Mammary epithelial cell (primary cell): ENCODE measurements at regions of chr14 and their contacts with region 1.

Region 1: DNA sequence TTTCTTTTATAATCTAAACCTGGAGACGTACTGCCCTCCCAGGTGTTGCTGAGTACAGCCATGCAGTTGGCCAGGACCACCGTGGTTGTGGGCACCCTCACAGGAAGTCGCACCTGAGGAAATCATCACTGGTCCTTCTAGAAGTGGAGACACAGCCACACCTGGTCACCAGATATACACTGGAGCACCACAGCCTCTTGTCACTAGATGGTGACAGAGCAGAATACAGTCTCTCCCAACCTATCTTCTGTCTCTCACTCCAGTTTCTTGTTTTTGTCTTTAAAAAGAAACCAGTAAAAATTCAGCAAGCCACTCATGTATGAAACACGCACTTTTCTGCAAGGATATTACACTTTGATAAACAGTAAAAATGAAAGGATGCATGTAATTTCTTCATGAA is 43.1 kb upstream of the GPHB5 start:
- DNase-seq: no peak
- H3K4me3 ChIP-seq: no peak overlapping the region
- H3K27ac ChIP-seq: no peak overlapping the region
- H3K4me1 ChIP-seq: no peaks in the 10 kb centered on the region
- H3K27me3 ChIP-seq: no peaks in the 10 kb centered on the region
- CTCF ChIP-seq: no peak

Region 2: DNA sequence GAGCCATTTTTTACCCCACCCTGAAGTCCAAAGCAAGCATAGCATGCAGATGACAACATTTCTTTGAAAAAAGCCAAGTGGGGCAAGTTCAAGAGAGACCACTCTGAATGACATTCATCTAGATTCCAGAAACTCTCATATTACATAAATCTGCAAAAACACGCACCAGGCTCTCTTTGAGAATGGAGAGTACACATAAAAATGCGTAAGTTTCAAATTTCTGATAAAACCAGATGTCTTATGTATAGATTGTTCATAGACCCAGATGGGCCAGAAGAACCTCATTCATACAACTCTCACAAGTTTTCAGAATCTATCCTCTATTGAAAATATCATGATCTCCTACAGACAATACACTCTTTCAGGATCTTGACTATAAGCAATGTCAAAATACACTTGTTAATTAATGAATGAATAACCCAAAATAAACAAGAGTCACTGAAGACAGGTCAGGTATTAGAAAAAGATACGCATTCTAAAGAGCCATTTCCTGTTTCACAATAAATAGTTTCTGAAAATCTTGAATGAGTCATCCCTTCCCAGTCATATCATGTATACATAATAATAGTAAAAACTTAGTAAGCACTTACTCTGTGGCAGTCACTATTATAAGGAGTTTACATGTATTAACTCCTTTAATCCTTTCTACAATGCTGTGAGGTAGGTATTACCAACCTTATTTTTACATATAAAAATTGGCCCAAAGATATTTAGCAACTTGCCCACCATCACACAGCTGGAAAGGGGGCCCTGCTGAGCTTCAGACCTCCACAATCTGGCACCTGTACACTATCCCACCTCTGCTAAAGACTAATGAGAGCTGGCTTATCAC is 109.4 kb after region 1 on chr14:
- CTCF ChIA-PET with region 1: no interaction called
- dilution Hi-C with region 1: no loop called
- in situ Hi-C with region 1: no loop called
- intact Hi-C with region 1: no loop called
- DNase-seq: peak; percentile 84
- H3K4me3 ChIP-seq: no peak overlapping the region
- H3K27ac ChIP-seq: peak overlapping the region; percentile 47
- H3K4me1 ChIP-seq: peaks cover 33% of the 10 kb centered on the region
- H3K27me3 ChIP-seq: no peaks in the 10 kb centered on the region
- CTCF ChIP-seq: no peak

Region 3: DNA sequence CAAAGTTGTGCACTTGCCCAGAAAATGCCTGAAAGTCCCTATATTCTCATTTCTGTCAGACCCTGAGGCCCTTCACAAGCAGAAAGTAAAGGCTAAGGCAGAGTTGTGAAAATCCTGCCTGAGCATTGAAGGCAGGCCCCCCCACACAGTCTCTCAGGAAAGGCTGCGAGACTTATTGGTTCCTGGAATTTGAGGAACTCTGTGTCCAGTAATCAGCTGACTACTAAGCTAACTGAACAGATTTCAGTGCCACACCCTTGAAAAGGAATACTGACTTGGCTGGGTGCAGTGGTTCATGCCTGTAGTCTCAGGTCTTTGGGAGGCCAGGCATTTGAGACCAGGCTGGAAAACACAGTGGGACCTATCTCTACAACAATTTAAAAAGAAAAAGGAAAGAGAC is 202.5 kb after region 1 on chr14:
- CTCF ChIA-PET with region 1: no interaction called
- dilution Hi-C with region 1: loop called (anchors 10 kb)
- in situ Hi-C with region 1: no loop called
- intact Hi-C with region 1: no loop called
- DNase-seq: no peak
- H3K4me3 ChIP-seq: no peak overlapping the region
- H3K27ac ChIP-seq: no peak overlapping the region
- H3K4me1 ChIP-seq: no peaks in the 10 kb centered on the region
- H3K27me3 ChIP-seq: no peaks in the 10 kb centered on the region
- CTCF ChIP-seq: no peak